ENCODE measurements at regions of chr16 and their contacts with region 1.

Region 1: GRCh38 chr16:20300312-20301097 is 26.8 kb downstream of the GP2 start:
- DNase-seq: peak; percentile 68 to 74 (median 69)
- ATAC-seq: peak; percentile 91
- H3K4me3 ChIP-seq: no peak overlapping the region
- H3K27ac ChIP-seq: no peak overlapping the region
- H3K4me1 ChIP-seq: peaks cover 2 to 11% of the 10 kb centered on the region in 2 experiments; a peak in 3 of 5 replicates
- H3K27me3 ChIP-seq: no peaks in the 10 kb centered on the region
- CTCF ChIP-seq: peak; percentile 84 to 90 (median 89)
- EP300 ChIP-seq: no peak
- POLR2A ChIP-seq: no peak
- RAD21 ChIP-seq: peak; percentile 51 to 81

Region 2: DNA sequence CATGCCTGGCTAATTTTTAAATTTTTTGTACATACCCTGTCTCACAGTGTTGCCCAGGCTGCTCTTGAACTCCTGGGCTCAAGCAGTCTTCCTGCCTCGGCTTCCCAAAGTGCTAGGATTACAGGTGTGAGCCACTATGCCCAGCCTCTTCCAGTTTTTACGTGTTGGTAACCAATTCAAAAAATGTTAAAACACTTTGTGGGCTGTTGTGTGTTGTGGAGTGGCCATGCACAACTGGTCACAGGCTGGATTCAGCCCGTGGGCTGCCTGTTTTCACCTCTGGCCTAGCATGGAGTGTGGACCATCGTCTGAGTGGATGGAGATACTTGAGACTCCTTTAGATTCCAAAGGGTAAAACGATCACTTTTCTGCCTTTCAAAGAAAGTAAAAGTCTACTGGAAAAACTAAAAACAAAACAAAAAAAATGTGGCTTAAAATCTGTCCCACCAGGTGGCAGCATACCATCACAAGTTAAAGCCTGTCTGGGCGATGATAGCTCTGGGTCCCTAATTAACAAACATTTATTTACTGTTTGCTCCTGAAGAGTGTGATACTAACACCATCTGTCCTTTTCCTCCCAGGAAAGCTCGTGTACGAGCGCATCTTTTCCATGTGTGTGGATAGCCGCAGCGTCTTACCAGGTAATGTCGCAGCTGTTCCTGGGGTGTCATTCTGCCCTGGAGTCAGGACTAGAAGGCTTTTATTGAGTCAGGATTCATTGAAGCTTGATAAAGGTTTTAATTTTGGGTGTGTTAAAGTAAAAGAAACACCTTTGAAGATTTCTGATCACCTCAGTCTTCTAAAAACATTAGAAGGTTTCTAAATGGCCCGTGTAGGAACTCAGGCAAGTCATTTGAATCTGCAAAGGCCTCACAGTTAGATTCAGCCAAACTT is 699.2 kb before region 1 on chr16:
- CTCF ChIA-PET with region 1: no interaction called
- POLR2A ChIA-PET with region 1: no interaction called
- in situ Hi-C with region 1: loop called (anchors 10 kb)
- intact Hi-C with region 1: no loop called
- DNase-seq: peak; percentile 44 to 59 (median 48)
- ATAC-seq: peak; percentile 47; the same call in 2 of the 3 replicates
- H3K4me3 ChIP-seq: no peak overlapping the region
- H3K27ac ChIP-seq: no peak overlapping the region
- H3K4me1 ChIP-seq: no peaks in the 10 kb centered on the region
- H3K27me3 ChIP-seq: no peaks in the 10 kb centered on the region
- CTCF ChIP-seq: peak; percentile 59 to 83 (median 70)
- EP300 ChIP-seq: no peak
- POLR2A ChIP-seq: no peak
- RAD21 ChIP-seq: peak; percentile 79 to 89

Region 3: DNA sequence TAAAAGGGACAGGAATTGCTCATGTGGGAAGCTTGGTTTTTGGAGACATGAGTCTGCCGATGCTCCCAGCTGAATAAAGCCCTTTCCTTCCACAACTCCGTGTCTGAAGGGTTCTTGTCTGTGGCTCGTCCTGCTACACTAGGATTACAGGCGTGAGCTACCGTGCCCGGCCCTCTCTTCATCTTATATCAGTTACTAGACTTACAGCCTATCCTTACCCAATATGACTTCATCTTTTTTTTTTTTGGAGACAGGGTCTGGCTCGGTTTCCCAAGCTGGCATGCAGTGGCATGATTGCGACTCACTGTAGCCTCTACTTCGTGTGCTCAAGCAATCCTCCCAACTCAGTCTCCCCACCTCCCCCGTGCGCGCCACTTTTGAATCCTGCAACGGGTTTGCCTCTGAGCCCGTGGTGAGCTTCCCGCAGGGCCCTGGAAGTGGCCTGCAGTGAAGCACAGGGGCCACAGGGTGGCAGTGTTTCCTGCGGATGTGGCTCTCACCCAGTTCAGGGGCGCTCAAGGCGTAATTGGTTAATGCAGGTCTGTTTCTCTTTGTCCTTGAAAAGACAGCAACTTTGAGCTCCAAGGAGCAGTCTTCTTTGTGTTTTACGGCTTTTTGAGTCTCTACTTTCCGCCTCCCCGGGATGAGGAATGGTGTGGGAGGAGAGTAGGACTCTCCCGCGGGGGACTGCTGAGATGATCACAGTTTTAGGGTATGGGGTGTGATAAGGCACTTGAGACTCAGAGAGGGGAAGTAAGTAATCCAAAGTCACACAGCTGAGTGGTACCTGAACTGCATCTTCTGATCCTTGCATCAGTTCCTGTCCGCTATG is 393.1 kb before region 1 on chr16:
- CTCF ChIA-PET with region 1: no interaction called
- POLR2A ChIA-PET with region 1: interaction called, 3 read pairs
- in situ Hi-C with region 1: loop called (anchors 5 kb)
- intact Hi-C with region 1: loop called (anchors 1 kb)
- DNase-seq: peak; percentile 78 to 84 (median 82)
- ATAC-seq: peak; percentile 100
- H3K4me3 ChIP-seq: no peak overlapping the region
- H3K27ac ChIP-seq: no peak overlapping the region
- H3K4me1 ChIP-seq: no peaks in the 10 kb centered on the region
- H3K27me3 ChIP-seq: peaks cover 0 to 19% of the 10 kb centered on the region in 2 experiments; a peak in 4 of 5 replicates
- CTCF ChIP-seq: peak; percentile 97 to 99 (median 98)
- EP300 ChIP-seq: 0 out of 2 replicates have a peak, but pooled peaks have one; percentile 7
- POLR2A ChIP-seq: no peak
- RAD21 ChIP-seq: peak; percentile 80 to 91

Region 4: GRCh38 chr16:20146759-20147490 is 153.6 kb before region 1 on chr16:
- CTCF ChIA-PET with region 1: no interaction called
- POLR2A ChIA-PET with region 1: no interaction called
- in situ Hi-C with region 1: no loop called
- intact Hi-C with region 1: no loop called
- DNase-seq: no peak
- ATAC-seq: no peak
- H3K4me3 ChIP-seq: no peak overlapping the region
- H3K27ac ChIP-seq: no peak overlapping the region
- H3K4me1 ChIP-seq: no peaks in the 10 kb centered on the region
- H3K27me3 ChIP-seq: no peaks in the 10 kb centered on the region
- CTCF ChIP-seq: no peak
- EP300 ChIP-seq: no peak
- POLR2A ChIP-seq: no peak
- RAD21 ChIP-seq: no peak